PC-3 (cell line): ENCODE measurements at regions of chr20 and their contacts with region 1.

Region 1: GRCh38 chr20:34312544-34313217 is 9.5 kb upstream of the AHCY start:
- DNase-seq: peak; percentile 95
- ATAC-seq: peak; percentile 48
- H3K4me3 ChIP-seq: peak overlapping the region; percentile 56
- H3K27ac ChIP-seq: no peak overlapping the region
- H3K4me1 ChIP-seq: peaks cover 52% of the 10 kb centered on the region
- H3K27me3 ChIP-seq: no peaks in the 10 kb centered on the region
- CTCF ChIP-seq: peak; percentile 100

Region 2: DNA sequence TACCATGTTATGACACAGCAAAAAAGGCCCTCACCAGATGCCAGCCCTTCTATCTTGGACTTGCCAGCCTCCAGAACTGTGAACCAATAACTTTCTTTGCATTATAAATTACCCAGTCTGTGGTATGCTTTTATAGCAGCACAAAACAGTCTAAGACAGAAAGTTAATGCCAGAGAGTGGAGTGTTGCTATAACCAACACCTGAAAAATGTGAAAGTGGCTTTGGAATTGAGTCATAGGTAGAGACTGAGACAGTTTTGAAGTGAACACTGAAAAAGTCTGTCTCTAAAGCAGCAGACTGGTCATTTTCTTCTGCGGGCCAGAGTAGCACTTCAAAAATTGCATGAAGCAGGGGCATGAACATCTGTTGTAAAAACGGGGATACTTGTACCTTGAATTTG is 99.5 kb before region 1 on chr20:
- CTCF ChIA-PET with region 1: no interaction called
- POLR2A ChIA-PET with region 1: no interaction called
- intact Hi-C with region 1: no loop called
- DNase-seq: no peak
- ATAC-seq: no peak
- H3K4me3 ChIP-seq: no peak overlapping the region
- H3K27ac ChIP-seq: no peak overlapping the region
- H3K4me1 ChIP-seq: peaks cover 6% of the 10 kb centered on the region
- H3K27me3 ChIP-seq: no peaks in the 10 kb centered on the region
- CTCF ChIP-seq: no peak

Region 3: GRCh38 chr20:34350095-34350494 is 37.4 kb after region 1 on chr20:
- CTCF ChIA-PET with region 1: interaction called, 17 read pairs
- POLR2A ChIA-PET with region 1: no interaction called
- intact Hi-C with region 1: no loop called
- DNase-seq: peak; percentile 56
- ATAC-seq: peak; percentile 63
- H3K4me3 ChIP-seq: no peak overlapping the region
- H3K27ac ChIP-seq: peak overlapping the region; percentile 73
- H3K4me1 ChIP-seq: peaks cover 14% of the 10 kb centered on the region
- H3K27me3 ChIP-seq: no peaks in the 10 kb centered on the region
- CTCF ChIP-seq: no peak

Region 4: DNA sequence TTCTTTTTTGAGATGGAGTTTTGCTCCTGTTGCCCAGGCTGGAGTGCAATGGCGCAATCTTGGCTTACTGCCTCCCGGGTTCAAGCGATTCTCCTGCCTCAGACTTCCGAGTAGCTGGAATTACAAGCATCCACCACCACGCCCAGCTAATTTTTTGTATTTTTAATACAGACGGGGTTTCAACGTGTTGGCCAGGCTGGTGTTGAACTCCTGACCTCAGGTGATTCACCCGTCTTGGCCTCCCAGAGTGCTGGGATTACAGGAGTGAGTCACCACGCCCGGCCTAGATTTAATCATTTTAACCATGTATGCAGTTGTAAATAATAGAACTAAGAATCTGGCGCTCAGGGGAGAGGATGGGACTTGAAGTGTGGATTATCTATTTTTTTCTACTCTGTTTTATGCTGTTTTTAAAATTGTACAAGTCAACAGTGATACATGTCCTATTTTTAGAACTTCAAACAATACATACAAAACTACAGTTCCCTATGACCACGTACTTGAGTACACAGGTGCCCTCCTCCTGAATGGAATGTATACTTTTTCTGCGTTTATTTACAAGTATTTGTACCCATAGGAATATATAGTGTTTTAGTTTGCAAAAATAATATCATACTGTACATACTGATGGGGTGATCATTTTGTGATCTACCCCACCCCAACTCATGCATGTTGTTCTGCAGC is 78.2 kb after region 1 on chr20:
- CTCF ChIA-PET with region 1: interaction called, 13 read pairs
- POLR2A ChIA-PET with region 1: no interaction called
- intact Hi-C with region 1: loop called (anchors 2 kb)
- DNase-seq: peak; percentile 97
- ATAC-seq: peak; percentile 95
- H3K4me3 ChIP-seq: peak overlapping the region; percentile 37; the same call in 1 of the 2 replicates
- H3K27ac ChIP-seq: peak overlapping the region; percentile 81
- H3K4me1 ChIP-seq: peaks cover 44% of the 10 kb centered on the region
- H3K27me3 ChIP-seq: no peaks in the 10 kb centered on the region
- CTCF ChIP-seq: no peak

Region 5: DNA sequence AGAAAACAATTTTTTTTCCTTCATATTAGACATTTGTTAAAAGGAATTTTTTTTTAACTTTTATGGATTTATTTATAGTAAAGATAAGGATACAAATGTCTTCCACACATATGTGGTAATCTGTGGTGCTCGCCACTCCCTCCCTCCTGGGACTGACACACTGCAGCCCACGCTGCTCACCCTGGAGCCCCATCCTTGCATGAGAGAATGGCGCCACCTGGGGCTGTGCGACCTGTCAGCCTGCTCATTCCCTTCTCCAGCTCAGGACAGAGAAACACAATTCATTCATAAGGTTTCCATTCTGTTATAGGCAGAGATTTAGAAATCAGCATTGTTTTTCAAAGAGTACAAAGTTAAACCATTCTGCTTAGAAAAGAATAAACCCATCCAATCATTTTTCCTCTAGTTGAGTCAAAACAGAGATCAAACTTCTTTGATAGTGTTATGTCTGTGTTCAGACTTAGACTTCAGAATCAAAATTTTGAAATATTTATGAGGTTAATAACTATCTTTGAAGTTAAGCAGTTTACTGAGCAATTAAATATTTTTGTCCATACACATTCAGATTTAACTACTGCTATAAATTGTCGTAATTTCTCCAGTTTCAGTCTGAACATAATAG is 160.7 kb after region 1 on chr20:
- CTCF ChIA-PET with region 1: interaction called, 6 read pairs
- POLR2A ChIA-PET with region 1: no interaction called
- intact Hi-C with region 1: loop called (anchors 1 kb)
- DNase-seq: peak; percentile 52
- ATAC-seq: peak; percentile 72
- H3K4me3 ChIP-seq: no peak overlapping the region
- H3K27ac ChIP-seq: no peak overlapping the region
- H3K4me1 ChIP-seq: peaks cover 7% of the 10 kb centered on the region; the same call in 1 of the 2 replicates
- H3K27me3 ChIP-seq: no peaks in the 10 kb centered on the region
- CTCF ChIP-seq: peak; percentile 70

Region 6: GRCh38 chr20:34522969-34523871 is 210.5 kb after region 1 on chr20:
- CTCF ChIA-PET with region 1: interaction called, 18 read pairs
- POLR2A ChIA-PET with region 1: no interaction called
- intact Hi-C with region 1: loop called (anchors 1 kb)
- DNase-seq: peak; percentile 87
- ATAC-seq: peak; percentile 50
- H3K4me3 ChIP-seq: no peak overlapping the region
- H3K27ac ChIP-seq: peak overlapping the region; percentile 43
- H3K4me1 ChIP-seq: peaks cover 44% of the 10 kb centered on the region
- H3K27me3 ChIP-seq: no peaks in the 10 kb centered on the region
- CTCF ChIP-seq: peak; percentile 92